ENCODE measurements at regions of chr7 and their contacts with region 1.

Region 1: DNA sequence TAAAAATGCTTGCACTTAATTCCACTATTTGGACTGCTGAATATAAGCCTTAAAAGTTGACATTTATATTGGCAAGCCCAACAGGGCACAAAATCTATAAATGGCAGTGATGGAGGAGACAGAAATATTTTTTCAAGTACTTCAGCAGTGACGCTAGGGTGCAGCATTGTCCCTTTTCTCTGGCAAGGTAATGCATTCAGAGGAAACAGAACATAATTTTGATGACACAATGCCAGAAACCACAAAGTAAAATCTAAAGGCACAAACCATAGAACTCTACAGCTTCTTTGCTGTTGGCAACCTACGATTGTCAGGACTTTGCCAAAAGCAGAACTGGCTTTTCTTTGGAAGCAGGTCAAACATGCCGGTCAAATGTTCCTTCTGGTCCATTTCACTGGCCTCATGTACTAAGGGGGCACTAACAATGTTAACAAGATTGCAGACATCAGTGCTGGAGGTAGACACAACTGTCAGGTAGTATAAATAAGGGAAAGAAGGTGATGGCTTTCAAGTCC is 30.9 kb upstream of the FAM133B start:
- H3K4me3 ChIP-seq: no peak overlapping the region
- H3K27ac ChIP-seq: no peak overlapping the region
- H3K4me1 ChIP-seq: no peaks in the 10 kb centered on the region
- CTCF ChIP-seq: peak; percentile 43; the same call in 1 of the 2 replicates

Region 2: GRCh38 chr7:92609921-92610518 is 11.1 kb before region 1 on chr7:
- CTCF ChIA-PET with region 1: interaction called, 35 read pairs
- POLR2A ChIA-PET with region 1: no interaction called
- H3K4me3 ChIP-seq: no peak overlapping the region
- H3K27ac ChIP-seq: no peak overlapping the region
- H3K4me1 ChIP-seq: peaks cover 2% of the 10 kb centered on the region; the same call in 1 of the 2 replicates
- CTCF ChIP-seq: no peak

Region 3: GRCh38 chr7:92674127-92674778 is 53.2 kb after region 1 on chr7:
- CTCF ChIA-PET with region 1: interaction called, 10 read pairs
- POLR2A ChIA-PET with region 1: no interaction called
- H3K4me3 ChIP-seq: no peak overlapping the region
- H3K27ac ChIP-seq: no peak overlapping the region
- H3K4me1 ChIP-seq: no peaks in the 10 kb centered on the region
- CTCF ChIP-seq: no peak

Region 4: DNA sequence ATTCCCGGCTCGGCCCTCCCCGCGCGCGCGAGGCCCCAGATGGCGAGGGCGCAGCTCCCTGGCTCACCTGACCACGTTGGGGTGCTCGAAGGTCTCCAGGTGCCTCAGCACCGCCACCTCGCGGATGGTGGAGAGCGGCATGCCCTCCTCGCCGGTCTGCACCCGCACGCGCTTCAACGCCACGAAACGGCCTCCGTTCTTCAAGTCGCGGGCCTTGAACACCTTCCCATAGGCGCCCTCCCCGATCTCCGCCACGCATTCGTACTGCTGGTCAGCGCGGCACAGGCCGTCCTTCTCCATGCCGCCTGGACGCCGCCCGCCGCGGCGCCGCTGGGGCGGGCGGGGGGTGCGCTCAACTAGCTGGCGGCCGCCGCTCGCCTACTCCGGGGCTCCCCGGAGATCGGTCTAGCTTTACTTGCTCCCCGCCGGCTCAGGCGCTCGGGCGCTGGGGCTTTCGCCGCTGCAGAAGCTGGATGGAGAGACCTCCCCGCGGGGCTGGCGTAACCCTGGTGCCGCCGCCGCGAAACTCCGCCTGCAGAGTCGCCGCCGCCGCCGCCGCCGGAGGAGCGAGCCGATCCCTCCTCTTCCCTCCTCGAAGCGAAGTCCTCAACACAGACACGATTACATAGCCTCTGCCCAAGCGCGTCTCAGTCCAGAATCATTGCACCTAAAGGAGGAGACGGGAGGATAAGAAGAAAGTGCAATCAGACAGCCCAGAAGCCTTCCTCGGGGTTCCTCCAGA is 212.1 kb after region 1 on chr7:
- CTCF ChIA-PET with region 1: interaction called, 15 read pairs
- POLR2A ChIA-PET with region 1: no interaction called
- H3K4me3 ChIP-seq: peak overlapping the region; percentile 80
- H3K27ac ChIP-seq: peak overlapping the region; percentile 96
- H3K4me1 ChIP-seq: 0 out of 2 replicates have a peak, but pooled peaks cover 7% of the 10 kb centered on the region
- CTCF ChIP-seq: peak; percentile 95